Activated B cell treated with CpG ODN at 0.5 μM for 24 hours (primary cell): ENCODE measurements at regions of chr12 and their contacts with region 1.

Region 1: GRCh38 chr12:24360907-24361306 is 411.4 kb upstream of the SOX5 start:
- DNase-seq: no peak
- ATAC-seq: peak; percentile 53
- H3K4me3 Mint-ChIP-seq: peak overlapping the region; percentile 69
- H3K27ac Mint-ChIP-seq: peak overlapping the region; percentile 76
- H3K4me1 Mint-ChIP-seq: peaks cover 65% of the 10 kb centered on the region
- H3K27me3 Mint-ChIP-seq: no peaks in the 10 kb centered on the region
- CTCF ChIP-seq: no peak

Region 2: DNA sequence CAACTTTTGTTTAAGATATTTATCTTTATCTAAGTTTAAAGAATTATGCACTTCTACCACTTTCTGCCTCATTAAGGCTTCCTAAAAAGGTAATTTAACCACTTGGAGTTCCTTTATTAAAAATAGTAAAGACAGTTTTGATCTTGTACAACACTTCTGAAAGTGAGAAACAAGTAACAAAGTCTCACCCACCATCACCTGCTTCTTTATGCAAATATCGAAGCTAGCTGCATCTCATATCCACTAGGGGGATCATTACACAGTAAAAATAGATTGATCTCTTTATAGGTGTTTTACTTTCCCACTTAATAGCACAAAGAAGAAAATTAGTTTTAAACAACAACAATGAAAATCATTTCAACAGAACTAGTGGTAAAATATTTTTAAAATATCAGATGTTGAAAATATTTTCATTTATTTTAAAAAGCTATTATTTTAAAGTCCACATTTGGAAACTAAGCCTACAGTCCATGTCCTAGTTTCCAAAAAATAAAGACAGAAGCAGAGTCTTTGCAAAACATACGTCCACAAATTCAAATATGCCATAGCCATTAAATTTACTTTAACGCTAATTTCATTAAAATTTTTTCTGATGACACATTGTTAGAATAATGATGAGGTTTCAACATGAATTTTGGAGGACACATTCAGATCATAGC is 251.4 kb before region 1 on chr12:
- CTCF ChIA-PET with region 1: no interaction called
- POLR2A ChIA-PET with region 1: no interaction called
- intact Hi-C with region 1: loop called (anchors 2 kb)
- DNase-seq: no peak
- ATAC-seq: peak; percentile 64
- H3K4me3 Mint-ChIP-seq: no peak overlapping the region
- H3K27ac Mint-ChIP-seq: no peak overlapping the region
- H3K4me1 Mint-ChIP-seq: peaks cover 5% of the 10 kb centered on the region
- H3K27me3 Mint-ChIP-seq: no peaks in the 10 kb centered on the region
- CTCF ChIP-seq: peak; percentile 36

Region 3: GRCh38 chr12:24349051-24349799 is 11.7 kb before region 1 on chr12:
- CTCF ChIA-PET with region 1: no interaction called
- POLR2A ChIA-PET with region 1: no interaction called
- intact Hi-C with region 1: no loop called
- DNase-seq: no peak
- ATAC-seq: peak; percentile 49
- H3K4me3 Mint-ChIP-seq: no peak overlapping the region
- H3K27ac Mint-ChIP-seq: no peak overlapping the region
- H3K4me1 Mint-ChIP-seq: peaks cover 24% of the 10 kb centered on the region
- H3K27me3 Mint-ChIP-seq: no peaks in the 10 kb centered on the region
- CTCF ChIP-seq: no peak

Region 4: DNA sequence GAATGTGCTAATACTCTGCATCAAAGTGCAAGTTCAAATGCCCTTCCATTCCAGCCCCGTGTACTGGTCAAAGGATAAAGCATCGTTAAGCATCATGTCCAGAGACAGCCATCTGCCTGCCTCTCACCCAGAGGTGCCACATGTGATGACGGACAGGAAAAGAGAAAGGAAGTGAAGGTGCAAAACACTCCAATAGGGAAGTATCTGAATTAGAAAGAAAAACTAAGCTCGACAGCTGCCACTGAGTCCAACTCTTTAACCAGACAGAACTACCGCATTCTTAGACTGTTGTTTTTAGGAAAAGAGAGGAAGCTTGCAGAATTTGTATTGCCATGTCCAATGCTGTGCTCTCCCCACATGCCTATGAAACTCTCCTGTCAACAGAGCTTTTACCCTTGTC is 53.6 kb after region 1 on chr12:
- CTCF ChIA-PET with region 1: no interaction called
- POLR2A ChIA-PET with region 1: interaction called, 23 read pairs
- intact Hi-C with region 1: loop called (anchors 2 kb)
- DNase-seq: no peak
- ATAC-seq: peak; percentile 36
- H3K4me3 Mint-ChIP-seq: peak overlapping the region; percentile 80
- H3K27ac Mint-ChIP-seq: peak overlapping the region; percentile 89
- H3K4me1 Mint-ChIP-seq: peaks cover 61% of the 10 kb centered on the region
- H3K27me3 Mint-ChIP-seq: no peaks in the 10 kb centered on the region
- CTCF ChIP-seq: no peak